ENCODE measurements at regions of chr17 and their contacts with region 1.

Region 1: GRCh38 chr17:39235555-39236449 is 10.1 kb upstream of the STAC2 start:
- DNase-seq: peak; percentile 67
- H3K4me3 Mint-ChIP-seq: no peak overlapping the region
- H3K27ac Mint-ChIP-seq: no peak overlapping the region
- H3K4me1 Mint-ChIP-seq: peaks cover 34% of the 10 kb centered on the region
- H3K27me3 Mint-ChIP-seq: peaks cover 4% of the 10 kb centered on the region

Region 2: GRCh38 chr17:39164675-39165143 is 71.1 kb before region 1 on chr17:
- CTCF ChIA-PET with region 1: interaction called, 10 read pairs
- POLR2A ChIA-PET with region 1: no interaction called
- DNase-seq: peak; percentile 81
- H3K4me3 Mint-ChIP-seq: peak overlapping the region; percentile 81
- H3K27ac Mint-ChIP-seq: no peak overlapping the region
- H3K4me1 Mint-ChIP-seq: peaks cover 38% of the 10 kb centered on the region
- H3K27me3 Mint-ChIP-seq: peaks cover 29% of the 10 kb centered on the region

Region 3: DNA sequence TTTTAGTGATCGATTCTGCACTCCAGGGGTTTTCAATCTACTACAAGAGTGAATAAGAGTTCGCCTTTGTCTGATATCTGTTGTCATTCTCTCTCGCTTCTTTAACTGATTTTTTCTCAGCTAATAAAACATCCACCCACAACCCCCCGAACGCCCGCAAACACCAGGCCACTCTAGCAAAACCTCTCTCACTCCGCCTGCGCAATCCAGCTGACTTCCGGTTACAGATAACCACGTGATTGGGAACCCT is 36.1 kb before region 1 on chr17:
- CTCF ChIA-PET with region 1: interaction called, 28 read pairs
- POLR2A ChIA-PET with region 1: interaction called, 3 read pairs
- DNase-seq: peak; percentile 92
- H3K4me3 Mint-ChIP-seq: peak overlapping the region; percentile 79
- H3K27ac Mint-ChIP-seq: peak overlapping the region; percentile 99
- H3K4me1 Mint-ChIP-seq: peaks cover 62% of the 10 kb centered on the region
- H3K27me3 Mint-ChIP-seq: no peaks in the 10 kb centered on the region

Region 4: DNA sequence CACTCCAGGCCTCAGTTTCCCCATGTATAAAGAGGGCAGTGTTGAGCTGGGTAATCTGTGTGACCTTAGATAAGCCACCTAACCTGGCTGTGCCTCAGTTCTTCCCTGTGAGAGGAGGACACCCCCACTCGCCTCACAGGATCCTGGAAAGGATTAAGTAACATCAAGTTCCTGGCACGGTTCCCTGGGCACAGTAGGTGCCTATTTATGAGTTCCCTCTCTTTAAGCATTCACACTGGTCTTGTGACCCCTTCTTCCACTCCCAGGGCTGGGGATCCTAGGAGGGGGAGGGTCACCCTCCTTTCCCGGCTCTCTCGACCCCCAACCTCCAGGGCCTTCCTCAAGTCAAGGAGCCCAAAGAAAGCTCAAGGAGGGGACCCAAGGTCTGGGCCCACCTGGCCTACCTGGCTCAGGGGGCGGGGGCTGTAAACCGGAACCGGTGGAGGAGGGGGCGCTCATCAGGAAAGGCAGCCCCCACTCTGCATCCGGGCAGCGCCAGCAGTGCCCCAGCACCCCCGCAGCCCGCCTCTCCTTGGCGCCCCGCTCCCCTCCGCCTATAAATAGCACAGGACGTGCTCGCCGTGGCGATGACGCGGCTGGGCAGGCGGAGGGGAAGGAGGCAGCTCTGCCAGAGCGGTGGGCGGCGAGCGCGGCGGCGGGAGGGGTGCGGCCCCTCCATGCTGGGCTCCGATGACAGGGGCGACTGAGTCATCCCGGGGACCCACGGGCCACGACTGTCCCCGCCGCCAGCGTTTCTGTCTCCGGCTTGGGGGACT is 26.3 kb before region 1 on chr17:
- CTCF ChIA-PET with region 1: interaction called, 28 read pairs
- POLR2A ChIA-PET with region 1: no interaction called
- DNase-seq: peak; percentile 62
- H3K4me3 Mint-ChIP-seq: no peak overlapping the region
- H3K27ac Mint-ChIP-seq: no peak overlapping the region
- H3K4me1 Mint-ChIP-seq: peaks cover 27% of the 10 kb centered on the region
- H3K27me3 Mint-ChIP-seq: peaks cover 9% of the 10 kb centered on the region

Region 5: GRCh38 chr17:39533899-39534298 is 298.1 kb after region 1 on chr17:
- CTCF ChIA-PET with region 1: no interaction called
- POLR2A ChIA-PET with region 1: no interaction called
- DNase-seq: no peak
- H3K4me3 Mint-ChIP-seq: no peak overlapping the region
- H3K27ac Mint-ChIP-seq: no peak overlapping the region
- H3K4me1 Mint-ChIP-seq: peaks cover 12% of the 10 kb centered on the region
- H3K27me3 Mint-ChIP-seq: no peaks in the 10 kb centered on the region